Naive thymus-derived CD4-positive, alpha-beta T cell (primary cell): ENCODE measurements at regions of chr7 and their contacts with region 1.

Region 1: DNA sequence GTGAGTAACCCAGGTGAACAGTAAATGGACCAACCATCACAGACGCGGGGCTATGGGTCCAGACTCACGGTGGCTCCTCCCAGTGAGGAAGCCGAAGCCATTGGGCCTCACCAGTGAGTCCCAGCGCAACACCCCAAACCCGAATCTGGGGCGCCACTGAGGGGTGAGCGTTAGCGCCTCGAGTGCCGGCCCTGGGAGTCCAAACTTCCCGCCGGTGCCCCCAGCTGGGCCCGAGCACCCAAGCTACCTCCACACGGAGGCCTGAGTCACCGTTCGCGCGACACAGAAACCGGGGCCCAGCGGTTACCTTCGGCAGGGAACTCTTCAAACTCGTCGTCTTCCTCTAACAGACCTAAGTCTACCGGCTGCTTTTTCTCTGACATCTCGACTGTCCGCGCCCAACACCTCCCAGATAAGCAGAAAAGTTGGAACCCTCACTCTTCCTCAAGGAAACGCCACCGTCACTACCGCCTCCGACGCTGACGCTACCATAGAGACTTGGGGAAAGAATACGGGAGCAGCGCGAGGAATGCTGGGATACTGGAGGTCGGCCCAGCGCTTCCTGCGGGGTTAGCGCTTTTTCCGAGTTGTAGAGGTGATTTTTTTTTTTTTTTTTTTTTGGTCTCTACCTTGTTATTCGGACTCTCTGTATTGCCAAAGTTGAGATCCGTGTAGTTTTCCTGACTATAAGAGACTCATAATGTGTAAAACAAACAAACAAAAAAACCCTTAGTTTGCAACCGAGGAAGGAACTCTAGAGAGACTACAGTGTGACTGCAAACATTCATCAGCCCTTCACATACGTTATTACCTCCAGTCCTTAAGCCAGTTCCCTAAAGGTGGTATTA is at the start of gene SEM1:
- DNase-seq: peak; percentile 20 to 65 (median 53)
- ATAC-seq: peak; percentile 88
- H3K4me3 ChIP-seq: peak within 1 kb of the TSS; percentile 70
- H3K4me3 Mint-ChIP-seq: peak within 1 kb of the TSS; percentile 96 to 100 (median 100)
- H3K27ac ChIP-seq: peak within 1 kb of the TSS; percentile 74
- H3K27ac Mint-ChIP-seq: peak within 1 kb of the TSS; percentile 88 to 100 (median 97)
- H3K4me1 ChIP-seq: peaks cover 13 to 14% of the 10 kb centered on the region in 2 donors
- H3K4me1 Mint-ChIP-seq: peaks cover 16 to 52% (median 42%) of the 10 kb centered on the region in 7 donors
- H3K27me3 ChIP-seq: no peaks in the 10 kb centered on the region
- H3K27me3 Mint-ChIP-seq: peaks cover 0 to 9% (median 8%) of the 10 kb centered on the region in 5 donors
- total RNA-seq, gene SEM1: 15.4 to 46.6 (median 28.3) TPM

Region 2: GRCh38 chr7:96414931-96415292 is 294.7 kb before region 1 on chr7:
- CTCF ChIA-PET with region 1: no interaction called
- POLR2A ChIA-PET with region 1: no interaction called
- intact Hi-C with region 1: loop called in 1 of 2 experiments (anchors 5 kb)
- DNase-seq: peak in 6 of 9 donors; percentile 13 to 40 (median 24)
- ATAC-seq: peak; percentile 67
- H3K4me3 ChIP-seq: no peak overlapping the region
- H3K4me3 Mint-ChIP-seq: no peak overlapping the region
- H3K27ac ChIP-seq: no peak overlapping the region
- H3K27ac Mint-ChIP-seq: no peak overlapping the region
- H3K4me1 ChIP-seq: no peaks in the 10 kb centered on the region
- H3K4me1 Mint-ChIP-seq: peaks cover 0 to 7% (median 0%) of the 10 kb centered on the region in 7 donors
- H3K27me3 ChIP-seq: no peaks in the 10 kb centered on the region
- H3K27me3 Mint-ChIP-seq: peaks cover 5 to 24% (median 18%) of the 10 kb centered on the region in 5 donors

Region 3: DNA sequence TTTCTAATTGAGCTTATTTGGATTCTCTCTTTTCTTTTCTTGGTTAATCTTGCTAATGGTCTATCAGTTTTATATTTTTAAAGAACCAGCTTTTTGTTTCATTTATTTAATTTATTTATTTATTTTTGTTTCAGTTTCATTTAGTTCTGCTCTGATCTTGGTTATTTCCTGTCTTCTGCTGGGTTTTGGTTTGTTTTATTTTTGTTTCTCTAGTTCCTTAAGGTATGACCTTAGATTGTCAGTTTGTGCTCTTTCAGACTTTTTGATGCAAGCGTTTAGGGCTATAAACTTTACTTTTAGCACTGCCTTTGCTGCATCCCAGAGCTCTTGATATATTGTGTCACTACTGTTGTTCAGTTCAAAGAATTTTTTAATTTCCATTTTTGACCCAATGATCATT is 238.0 kb before region 1 on chr7:
- CTCF ChIA-PET with region 1: no interaction called
- POLR2A ChIA-PET with region 1: no interaction called
- intact Hi-C with region 1: loop called in 1 of 2 experiments (anchors 5 kb)
- DNase-seq: peak in 1 of 9 donors; percentile 6
- ATAC-seq: no peak
- H3K4me3 ChIP-seq: no peak overlapping the region
- H3K4me3 Mint-ChIP-seq: peak overlapping the region in 9 of 10 donors; percentile 28 to 71 (median 55)
- H3K27ac ChIP-seq: no peak overlapping the region
- H3K27ac Mint-ChIP-seq: peak overlapping the region in 6 of 9 donors; percentile 11 to 82 (median 40)
- H3K4me1 ChIP-seq: no peaks in the 10 kb centered on the region
- H3K4me1 Mint-ChIP-seq: peaks cover 7 to 28% (median 23%) of the 10 kb centered on the region in 7 donors
- H3K27me3 ChIP-seq: peaks cover 0 to 4% of the 10 kb centered on the region in 2 donors
- H3K27me3 Mint-ChIP-seq: peaks cover 0 to 13% (median 10%) of the 10 kb centered on the region in 5 donors

Region 4: DNA sequence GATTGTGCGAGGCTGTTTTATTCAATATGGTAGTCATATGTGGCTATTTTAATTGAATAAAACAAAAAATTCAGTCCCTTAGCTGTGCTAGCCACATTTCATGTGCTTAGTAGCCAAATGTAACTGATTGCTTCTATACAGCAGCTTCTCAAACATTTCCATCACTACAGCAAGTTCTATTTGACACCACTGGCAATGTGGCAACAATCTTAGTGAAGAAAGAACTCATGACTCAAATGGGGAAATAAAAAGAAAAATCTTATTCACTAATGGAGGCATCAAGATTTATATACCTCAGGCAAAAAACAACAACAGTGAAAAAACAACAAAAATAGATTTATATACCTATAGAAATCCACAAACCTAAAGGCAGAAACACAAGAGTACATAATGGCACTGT is 17.9 kb before region 1 on chr7:
- CTCF ChIA-PET with region 1: no interaction called
- POLR2A ChIA-PET with region 1: no interaction called
- intact Hi-C with region 1: loop called in 1 of 2 experiments (anchors 2 kb)
- DNase-seq: no peak
- ATAC-seq: no peak
- H3K4me3 ChIP-seq: no peak overlapping the region
- H3K4me3 Mint-ChIP-seq: no peak overlapping the region
- H3K27ac ChIP-seq: no peak overlapping the region
- H3K27ac Mint-ChIP-seq: peak overlapping the region in 2 of 9 donors; percentile 24 to 52
- H3K4me1 ChIP-seq: no peaks in the 10 kb centered on the region
- H3K4me1 Mint-ChIP-seq: peaks cover 0 to 55% (median 28%) of the 10 kb centered on the region in 7 donors
- H3K27me3 ChIP-seq: no peaks in the 10 kb centered on the region
- H3K27me3 Mint-ChIP-seq: no peaks in the 10 kb centered on the region

Region 5: DNA sequence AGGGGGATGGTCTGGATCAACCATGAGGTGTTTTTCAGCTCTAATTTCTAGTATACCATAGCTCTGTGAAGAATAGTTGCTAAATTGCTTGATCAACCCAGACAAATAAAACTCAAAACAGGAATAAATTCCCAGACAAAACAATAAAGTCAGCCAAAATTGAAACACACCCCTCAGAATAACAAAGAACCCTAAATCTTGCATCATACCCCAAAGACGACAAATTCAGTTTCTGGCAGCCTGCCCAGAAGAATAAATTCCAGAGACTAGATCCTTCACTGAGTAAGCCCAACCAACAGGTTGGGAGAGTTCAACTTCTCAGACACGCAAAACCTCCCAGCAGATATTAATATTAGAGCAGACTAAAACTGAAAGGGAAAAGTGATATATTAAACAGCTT is 11.2 kb after region 1 on chr7:
- CTCF ChIA-PET with region 1: no interaction called
- POLR2A ChIA-PET with region 1: no interaction called
- intact Hi-C with region 1: no loop called
- DNase-seq: no peak
- ATAC-seq: no peak
- H3K4me3 ChIP-seq: no peak overlapping the region
- H3K4me3 Mint-ChIP-seq: no peak overlapping the region
- H3K27ac ChIP-seq: no peak overlapping the region
- H3K27ac Mint-ChIP-seq: no peak overlapping the region
- H3K4me1 ChIP-seq: no peaks in the 10 kb centered on the region
- H3K4me1 Mint-ChIP-seq: no peaks in the 10 kb centered on the region
- H3K27me3 ChIP-seq: peaks cover 0 to 2% of the 10 kb centered on the region in 2 donors
- H3K27me3 Mint-ChIP-seq: peaks cover 39 to 71% (median 53%) of the 10 kb centered on the region in 5 donors

Region 6: GRCh38 chr7:96837593-96837992 is 128.0 kb after region 1 on chr7:
- CTCF ChIA-PET with region 1: no interaction called
- POLR2A ChIA-PET with region 1: no interaction called
- intact Hi-C with region 1: loop called (anchors 10 kb)
- DNase-seq: peak in 8 of 9 donors; percentile 22 to 81 (median 70)
- ATAC-seq: peak; percentile 91
- H3K4me3 ChIP-seq: no peak overlapping the region
- H3K4me3 Mint-ChIP-seq: peak overlapping the region; percentile 5 to 85 (median 76)
- H3K27ac ChIP-seq: no peak overlapping the region
- H3K27ac Mint-ChIP-seq: peak overlapping the region in 4 of 9 donors; percentile 6 to 60 (median 28)
- H3K4me1 ChIP-seq: peaks cover 16 to 26% of the 10 kb centered on the region in 2 donors
- H3K4me1 Mint-ChIP-seq: peaks cover 21 to 46% (median 35%) of the 10 kb centered on the region in 7 donors
- H3K27me3 ChIP-seq: no peaks in the 10 kb centered on the region
- H3K27me3 Mint-ChIP-seq: peaks cover 17 to 58% (median 41%) of the 10 kb centered on the region in 5 donors